Activated T-helper 1 cell treated with anti-CD3 and anti-CD28 coated beads, Interleukin-12 subunit alpha, Interleukin-12 subunit beta, Interleukin-2, Interleukin-4 antibody, amounts not matched to agents 30 ng/mL and 10 ng/mL and 1 ng/mL, durations not matched to agents 14 hours and 24 hours and 36 hours (primary cell): ENCODE measurements at regions of chr19 and their contacts with region 1.

Region 1: GRCh38 chr19:50357178-50358100 is 8.0 kb downstream of the NAPSA start:
- DNase-seq: peak; percentile 86
- H3K4me3 Mint-ChIP-seq: peak overlapping the region; percentile 90
- H3K27ac Mint-ChIP-seq: peak overlapping the region; percentile 99
- H3K4me1 Mint-ChIP-seq: peaks cover 52% of the 10 kb centered on the region
- H3K27me3 Mint-ChIP-seq: no peaks in the 10 kb centered on the region

Region 2: GRCh38 chr19:50376166-50377050 is 19.0 kb after region 1 on chr19 and contains the start of gene NR1H2:
- intact Hi-C with region 1: loop called (anchors 1 kb)
- DNase-seq: peak; percentile 93
- H3K4me3 Mint-ChIP-seq: peak within 1 kb of the TSS; percentile 100
- H3K27ac Mint-ChIP-seq: peak within 1 kb of the TSS; percentile 99
- H3K4me1 Mint-ChIP-seq: peaks cover 27% of the 10 kb centered on the region
- H3K27me3 Mint-ChIP-seq: no peaks in the 10 kb centered on the region
- total RNA-seq, gene NR1H2: 84.3 and 84.8 TPM in 2 replicates

Region 3: GRCh38 chr19:50414864-50415660 is 57.6 kb after region 1 on chr19:
- intact Hi-C with region 1: loop called (anchors 1 kb)
- DNase-seq: peak; percentile 56
- H3K4me3 Mint-ChIP-seq: no peak overlapping the region
- H3K27ac Mint-ChIP-seq: no peak overlapping the region
- H3K4me1 Mint-ChIP-seq: peaks cover 9% of the 10 kb centered on the region
- H3K27me3 Mint-ChIP-seq: peaks cover 2% of the 10 kb centered on the region

Region 4: GRCh38 chr19:50461066-50461875 is 103.8 kb after region 1 on chr19:
- intact Hi-C with region 1: loop called (anchors 1 kb)
- DNase-seq: peak; percentile 56
- H3K4me3 Mint-ChIP-seq: no peak overlapping the region
- H3K27ac Mint-ChIP-seq: no peak overlapping the region
- H3K4me1 Mint-ChIP-seq: peaks cover 8% of the 10 kb centered on the region
- H3K27me3 Mint-ChIP-seq: no peaks in the 10 kb centered on the region

Region 5: GRCh38 chr19:50511068-50511822 is 153.8 kb after region 1 on chr19 and contains the start of gene JOSD2:
- intact Hi-C with region 1: loop called (anchors 1 kb)
- DNase-seq: peak; percentile 97
- H3K4me3 Mint-ChIP-seq: peak within 1 kb of the TSS; percentile 96
- H3K27ac Mint-ChIP-seq: peak within 1 kb of the TSS; percentile 99
- H3K4me1 Mint-ChIP-seq: peaks cover 18% of the 10 kb centered on the region
- H3K27me3 Mint-ChIP-seq: peaks cover 10% of the 10 kb centered on the region
- total RNA-seq, gene JOSD2: 38.5 and 41.7 TPM in 2 replicates

Region 6: DNA sequence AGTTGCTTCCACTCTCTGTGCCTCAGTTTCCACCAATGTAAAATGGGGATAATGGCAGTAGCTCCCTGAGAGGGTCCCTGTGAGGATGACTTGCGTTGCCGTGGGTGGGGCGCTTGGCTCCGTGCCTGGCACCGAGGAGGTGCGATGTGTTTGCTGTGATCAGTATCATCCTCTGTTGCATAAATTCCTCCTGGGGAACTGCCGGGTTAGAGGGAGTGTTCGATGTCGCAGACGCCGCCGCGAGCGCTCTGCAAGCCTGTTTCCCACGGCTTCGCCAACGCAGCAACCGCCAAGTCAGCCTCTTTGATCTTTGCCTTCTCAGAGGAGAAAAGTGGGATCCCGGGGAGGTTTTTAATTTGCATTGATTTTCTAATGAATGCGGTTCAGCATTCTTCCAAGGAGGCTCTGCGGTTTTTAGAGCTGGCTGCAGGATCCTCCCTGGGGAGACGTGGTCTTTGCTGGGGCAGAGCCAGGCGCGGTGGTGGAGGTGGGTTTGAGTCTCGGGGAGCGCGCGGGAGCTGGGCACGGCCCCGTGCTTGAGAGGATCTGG is 420.4 kb after region 1 on chr19:
- intact Hi-C with region 1: loop called (anchors 2 kb)
- DNase-seq: no peak
- H3K4me3 Mint-ChIP-seq: no peak overlapping the region
- H3K27ac Mint-ChIP-seq: no peak overlapping the region
- H3K4me1 Mint-ChIP-seq: peaks cover 16% of the 10 kb centered on the region
- H3K27me3 Mint-ChIP-seq: peaks cover 47% of the 10 kb centered on the region